ENCODE measurements at regions of chr19 and their contacts with region 1.

Region 1: GRCh38 chr19:14198384-14199376 is 7.3 kb downstream of the ADGRL1 start:
- DNase-seq: no peak
- ATAC-seq: no peak
- H3K4me3 ChIP-seq: no peak overlapping the region
- H3K27ac ChIP-seq: no peak overlapping the region
- H3K4me1 ChIP-seq: no peaks in the 10 kb centered on the region
- H3K27me3 ChIP-seq: no peaks in the 10 kb centered on the region
- CTCF ChIP-seq: no peak
- POLR2A ChIP-seq: no peak

Region 2: DNA sequence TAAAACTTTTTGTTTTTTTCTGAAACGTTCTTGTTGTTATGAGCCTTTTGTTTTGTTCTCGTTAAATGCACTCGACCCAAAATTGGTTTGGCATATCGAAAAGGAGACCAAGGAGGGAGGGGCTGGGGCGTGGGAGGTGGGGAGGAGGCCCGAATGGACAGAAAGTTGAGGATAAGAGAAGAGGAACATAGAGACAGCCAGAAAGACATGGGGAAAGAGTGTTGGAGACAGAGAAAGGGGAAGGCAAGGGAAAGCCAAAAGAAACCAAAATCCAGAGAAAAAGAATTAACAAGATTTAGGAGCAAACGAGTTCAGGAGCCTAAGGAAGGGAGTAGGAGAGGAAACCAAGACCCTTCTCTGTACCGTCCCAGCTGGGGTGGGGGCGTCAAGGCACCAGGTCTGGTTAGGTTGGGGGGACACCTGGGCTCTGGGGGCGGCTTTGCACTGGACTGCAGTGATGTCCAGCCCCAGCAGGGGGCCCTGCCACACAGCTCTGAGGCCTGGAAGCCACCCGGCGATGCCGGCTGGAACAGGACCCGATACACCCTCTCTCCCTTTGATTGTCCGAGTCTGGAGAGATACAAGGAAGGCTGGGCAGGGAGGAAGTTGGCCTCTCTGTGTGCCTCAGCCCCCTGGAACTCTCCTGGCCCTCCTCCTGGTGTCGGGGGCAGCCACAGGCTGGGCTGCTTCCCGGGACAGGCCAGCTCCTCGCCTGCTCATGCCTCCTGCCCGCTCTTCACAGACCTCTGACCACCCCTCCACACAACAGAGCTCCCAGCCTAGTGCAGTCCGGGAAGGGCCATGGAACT is 50.7 kb before region 1 on chr19:
- in situ Hi-C with region 1: no loop called
- intact Hi-C with region 1: loop called (anchors 5 kb)
- DNase-seq: peak in 1 of 2 donors; percentile 37
- ATAC-seq: peak; percentile 51 to 73
- H3K4me3 ChIP-seq: no peak overlapping the region
- H3K27ac ChIP-seq: peak overlapping the region in 3 of 4 donors; percentile 49 to 76 (median 73)
- H3K4me1 ChIP-seq: peaks cover 11 to 19% of the 10 kb centered on the region in 2 donors
- H3K27me3 ChIP-seq: no peaks in the 10 kb centered on the region
- CTCF ChIP-seq: peak; percentile 59 to 79 (median 71)
- POLR2A ChIP-seq: no peak

Measured in gastrocnemius medialis (tissue), 4 donors.